Gastrocnemius medialis (tissue), 4 donors: ENCODE measurements at regions of chr2 and their contacts with region 1.

Region 1: DNA sequence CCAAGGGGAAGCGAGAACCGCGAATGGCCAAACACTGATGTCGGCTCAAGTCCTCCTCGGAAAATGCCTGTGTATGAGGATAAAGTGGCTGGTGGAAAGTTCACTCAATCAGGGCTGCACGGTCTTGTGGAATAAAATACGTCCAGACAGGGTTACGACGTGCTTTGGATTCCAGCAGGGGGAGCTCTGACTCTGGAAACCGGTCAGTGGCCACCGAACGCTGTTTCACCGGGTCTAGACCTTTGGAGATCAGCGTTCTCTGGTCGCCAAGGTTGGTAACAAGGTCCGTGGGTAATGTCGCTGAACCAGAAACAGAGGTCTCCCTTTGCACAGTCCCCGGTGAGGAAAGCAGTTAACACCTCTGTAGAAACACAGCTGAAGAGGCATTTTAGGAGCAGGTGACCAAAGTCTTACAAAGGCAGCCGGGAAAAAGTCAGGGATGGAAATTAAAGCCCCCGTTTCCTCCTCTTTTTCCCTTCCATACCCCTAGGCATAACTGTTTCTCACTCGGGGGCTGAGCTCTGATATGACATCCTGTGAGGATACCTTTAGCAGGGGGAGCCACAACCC is 47.8 kb downstream of the CDCA7 start:
- DNase-seq: peak; percentile 72 to 77
- ATAC-seq: peak; percentile 92 to 96
- H3K4me3 ChIP-seq: peak overlapping the region; percentile 21 to 50 (median 45)
- H3K27ac ChIP-seq: peak overlapping the region in 1 of 4 donors; percentile 35
- H3K4me1 ChIP-seq: peaks cover 12 to 13% of the 10 kb centered on the region in 2 donors
- H3K27me3 ChIP-seq: no peaks in the 10 kb centered on the region
- CTCF ChIP-seq: peak; percentile 83 to 88 (median 85)
- POLR2A ChIP-seq: no peak

Region 2: DNA sequence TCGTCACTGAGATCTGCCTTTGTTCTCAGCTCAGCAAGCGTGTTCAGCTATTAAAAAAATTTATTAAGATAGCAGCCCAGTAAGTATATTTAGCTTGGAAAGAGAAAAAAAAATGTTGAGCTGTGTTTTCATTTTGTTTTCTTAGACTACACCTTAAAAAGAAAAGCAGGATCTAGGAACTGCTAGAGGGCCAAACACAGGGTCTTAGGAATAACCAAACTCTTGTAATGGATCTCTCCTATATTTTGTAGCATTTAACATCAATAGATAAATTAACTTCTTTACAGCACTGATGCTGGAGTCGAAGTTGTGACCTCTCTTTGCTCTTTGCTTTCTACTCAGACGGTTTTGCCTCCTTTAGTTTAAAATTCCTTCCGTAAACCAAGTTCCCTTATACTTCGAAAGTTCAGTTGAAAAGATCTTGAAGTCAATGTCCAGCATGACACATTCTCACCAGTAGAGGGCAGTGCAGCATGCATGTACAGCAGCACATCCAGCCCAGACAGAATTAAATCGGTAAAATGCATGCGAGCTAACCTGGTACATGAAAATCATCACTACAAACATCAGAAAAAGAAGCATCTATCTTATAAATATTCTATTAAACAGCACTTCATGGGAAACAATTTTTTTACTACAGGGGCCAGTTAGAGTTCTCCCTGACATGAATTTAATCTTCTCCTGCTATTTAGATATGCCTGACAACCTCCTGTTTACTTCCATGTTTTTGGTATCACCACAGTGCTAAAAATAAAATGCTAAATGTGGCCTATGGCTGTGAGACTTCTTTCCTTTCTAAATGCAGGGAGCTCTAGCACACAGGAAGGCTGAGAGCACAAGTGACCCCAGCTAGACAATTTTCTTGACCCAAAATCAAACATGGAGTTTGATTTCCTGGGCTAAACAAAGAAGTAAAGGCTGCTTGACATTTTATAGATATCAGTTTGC is 375.0 kb before region 1 on chr2:
- in situ Hi-C with region 1: no loop called
- intact Hi-C with region 1: loop called (anchors 5 kb)
- DNase-seq: peak; percentile 77 to 84
- ATAC-seq: peak; percentile 71 to 78
- H3K4me3 ChIP-seq: peak overlapping the region in 3 of 4 donors; percentile 14 to 27 (median 18)
- H3K27ac ChIP-seq: peak overlapping the region; percentile 86 to 94 (median 90)
- H3K4me1 ChIP-seq: peaks cover 56 to 57% of the 10 kb centered on the region in 2 donors
- H3K27me3 ChIP-seq: no peaks in the 10 kb centered on the region
- CTCF ChIP-seq: peak; percentile 94 to 98 (median 95)
- POLR2A ChIP-seq: peak; percentile 18 to 87

Region 3: GRCh38 chr2:173326806-173327205 is 75.7 kb before region 1 on chr2:
- in situ Hi-C with region 1: no loop called
- intact Hi-C with region 1: no loop called
- DNase-seq: no peak
- ATAC-seq: no peak
- H3K4me3 ChIP-seq: no peak overlapping the region
- H3K27ac ChIP-seq: no peak overlapping the region
- H3K4me1 ChIP-seq: no peaks in the 10 kb centered on the region
- H3K27me3 ChIP-seq: no peaks in the 10 kb centered on the region
- CTCF ChIP-seq: no peak
- POLR2A ChIP-seq: no peak

Region 4: GRCh38 chr2:173448938-173449471 is 46.5 kb after region 1 on chr2:
- in situ Hi-C with region 1: loop called in 2 of 4 experiments (anchors 5 kb)
- intact Hi-C with region 1: loop called (anchors 1 kb)
- DNase-seq: peak; percentile 54 to 72
- ATAC-seq: peak; percentile 63 to 86
- H3K4me3 ChIP-seq: peak overlapping the region; percentile 13 to 43 (median 36)
- H3K27ac ChIP-seq: peak overlapping the region; percentile 12 to 57 (median 46)
- H3K4me1 ChIP-seq: no peaks in the 10 kb centered on the region
- H3K27me3 ChIP-seq: no peaks in the 10 kb centered on the region
- CTCF ChIP-seq: peak; percentile 69 to 83 (median 73)
- POLR2A ChIP-seq: peak in 1 of 2 donors; percentile 13

Region 5: GRCh38 chr2:173667417-173667816 is 264.9 kb after region 1 on chr2:
- in situ Hi-C with region 1: no loop called
- intact Hi-C with region 1: loop called (anchors 5 kb)
- DNase-seq: no peak
- ATAC-seq: no peak
- H3K4me3 ChIP-seq: no peak overlapping the region
- H3K27ac ChIP-seq: no peak overlapping the region
- H3K4me1 ChIP-seq: no peaks in the 10 kb centered on the region
- H3K27me3 ChIP-seq: no peaks in the 10 kb centered on the region
- CTCF ChIP-seq: peak in 1 of 5 experiments; percentile 19
- POLR2A ChIP-seq: no peak

Region 6: DNA sequence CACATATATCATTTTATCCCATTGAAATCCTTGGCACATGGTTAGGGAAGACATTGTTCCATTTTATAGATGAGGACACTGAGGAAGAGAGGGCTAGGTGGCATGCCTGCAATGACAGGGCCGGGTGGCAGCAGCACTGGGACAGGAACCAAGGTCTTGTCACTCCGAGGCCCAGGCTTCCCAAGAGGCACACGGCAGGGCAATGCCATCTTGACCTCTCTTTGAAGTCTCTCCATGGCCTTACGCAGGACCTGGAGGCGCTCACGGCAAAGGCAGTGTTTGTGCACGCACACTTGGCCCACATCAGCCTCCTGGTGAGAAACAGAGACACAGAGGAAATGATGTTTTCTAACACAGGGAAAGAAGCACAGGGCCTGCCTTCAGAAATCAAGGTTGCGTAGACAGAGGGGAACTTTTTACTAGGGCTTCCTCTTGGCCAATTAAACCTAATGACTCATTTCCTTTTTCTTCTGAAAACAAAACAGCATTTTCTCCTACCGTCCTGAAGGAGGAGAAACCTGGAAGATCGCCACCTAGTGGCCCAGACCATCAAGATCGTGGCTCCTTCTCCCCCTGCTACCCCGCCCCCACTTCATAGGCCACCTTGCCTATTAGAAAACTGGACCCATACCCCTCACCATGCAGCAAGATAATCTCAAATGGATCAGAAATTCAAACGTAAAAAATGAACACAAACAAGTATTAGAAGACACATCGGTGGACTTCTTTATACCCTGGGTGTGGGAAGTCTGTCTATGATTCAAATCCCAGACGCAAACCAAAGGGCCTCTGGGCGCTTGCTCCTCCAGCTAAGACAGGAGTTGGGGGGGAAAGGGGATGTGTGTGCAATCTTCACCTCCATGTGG is 637.3 kb after region 1 on chr2:
- in situ Hi-C with region 1: no loop called
- intact Hi-C with region 1: loop called (anchors 5 kb)
- DNase-seq: peak; percentile 78 to 87
- ATAC-seq: peak; percentile 81 to 84
- H3K4me3 ChIP-seq: peak overlapping the region in 3 of 4 donors; percentile 15 to 47 (median 34)
- H3K27ac ChIP-seq: peak overlapping the region; percentile 46 to 88 (median 77)
- H3K4me1 ChIP-seq: peaks cover 11 to 36% of the 10 kb centered on the region in 2 donors
- H3K27me3 ChIP-seq: no peaks in the 10 kb centered on the region
- CTCF ChIP-seq: peak; percentile 72 to 86 (median 82)
- POLR2A ChIP-seq: no peak

Region 7: DNA sequence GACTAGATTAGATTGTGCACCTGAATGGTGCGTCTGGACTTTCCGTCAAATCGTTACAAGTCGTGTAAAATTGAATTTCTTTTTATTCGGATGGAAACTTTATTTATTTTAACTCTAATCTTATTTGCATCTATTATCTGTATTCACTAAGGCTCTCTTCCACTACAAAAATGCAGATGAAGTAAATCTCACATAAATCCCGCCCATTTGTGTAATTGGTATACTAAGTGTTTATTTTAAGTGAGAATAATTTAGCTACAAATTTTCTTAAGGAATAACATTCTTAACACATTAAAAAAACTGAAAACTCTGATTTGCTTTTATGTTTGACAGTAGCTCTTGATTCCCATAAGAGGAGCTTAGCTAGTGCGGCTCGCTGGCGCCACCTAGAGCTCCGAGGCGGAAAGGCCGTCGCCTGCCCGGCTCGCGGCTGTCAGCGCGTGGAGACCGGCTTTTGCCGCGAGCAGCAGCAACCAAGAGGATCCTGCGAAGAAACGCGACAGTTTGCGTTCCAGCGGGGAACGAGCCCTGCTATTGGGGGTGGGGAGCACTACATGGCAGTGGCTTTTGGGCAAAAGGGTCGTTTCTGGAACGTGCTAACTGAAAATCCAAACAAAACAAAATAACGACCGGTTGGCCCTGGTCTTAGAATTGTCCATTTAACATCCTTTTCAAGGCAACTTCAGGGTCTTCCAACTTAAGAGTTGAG is 939.0 kb after region 1 on chr2:
- in situ Hi-C with region 1: loop called (anchors 5 to 25 kb)
- intact Hi-C with region 1: loop called (anchors 2 kb)
- DNase-seq: peak; percentile 67 to 75
- ATAC-seq: peak; percentile 63 to 86
- H3K4me3 ChIP-seq: peak overlapping the region; percentile 21 to 49 (median 30)
- H3K27ac ChIP-seq: no peak overlapping the region
- H3K4me1 ChIP-seq: peaks cover 18 to 23% of the 10 kb centered on the region in 2 donors
- H3K27me3 ChIP-seq: peaks cover 70 to 80% (median 73%) of the 10 kb centered on the region in 3 donors
- CTCF ChIP-seq: peak; percentile 77 to 99 (median 91)
- POLR2A ChIP-seq: no peak